MCF 10A (cell line): ENCODE measurements at regions of chr19 and their contacts with region 1.

Region 1: DNA sequence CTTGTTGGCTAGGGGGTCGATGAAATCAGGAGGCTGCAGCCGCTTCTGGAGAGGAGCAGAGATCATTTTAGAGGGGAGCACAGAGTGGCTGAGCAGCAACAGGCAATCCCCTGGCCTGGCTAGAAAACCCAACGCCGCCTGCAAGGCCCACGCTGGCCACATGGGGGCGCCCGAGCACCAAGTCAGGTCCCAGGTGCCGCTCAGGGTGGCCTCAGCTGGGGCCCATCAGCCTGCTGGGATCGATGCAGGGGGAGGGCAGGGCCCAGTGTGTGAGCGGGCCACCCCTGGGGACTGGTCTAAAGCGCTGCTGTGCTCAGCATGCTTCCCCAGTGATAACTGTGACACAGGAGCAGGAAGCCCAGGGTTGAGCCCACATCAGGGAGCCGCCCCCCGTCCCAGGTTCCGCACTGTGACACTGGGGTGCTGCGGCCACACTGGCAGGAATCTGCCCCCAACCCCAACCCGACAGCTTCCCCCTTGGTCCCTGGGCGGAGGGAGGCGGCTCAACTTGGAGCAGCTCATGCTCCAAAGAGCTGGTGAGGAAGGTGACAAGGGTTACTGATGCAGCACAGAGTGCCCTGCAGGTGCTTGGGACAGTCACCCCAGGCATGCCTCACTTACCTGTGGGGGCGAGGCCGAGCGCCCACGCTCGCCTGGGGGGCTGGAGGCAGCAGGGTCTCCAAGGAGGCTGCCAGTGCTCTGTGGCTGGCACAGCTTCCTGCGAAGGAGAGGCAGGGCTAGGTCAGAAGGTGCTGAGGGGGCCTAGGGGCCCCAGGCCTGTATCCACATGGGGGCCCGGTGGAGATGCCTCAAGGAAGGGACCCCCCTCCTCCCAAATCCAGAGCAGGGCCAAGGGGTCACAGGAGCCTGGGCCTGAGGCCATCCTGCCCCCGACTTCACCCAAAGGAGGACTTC is 13.3 kb upstream of the ISYNA1 start:
- DNase-seq: peak; percentile 78
- H3K4me3 Mint-ChIP-seq: no peak overlapping the region
- H3K27ac Mint-ChIP-seq: peak overlapping the region; percentile 14
- H3K4me1 Mint-ChIP-seq: peaks cover 9% of the 10 kb centered on the region
- H3K27me3 Mint-ChIP-seq: no peaks in the 10 kb centered on the region
- CTCF ChIP-seq: peak; percentile 97

Region 2: GRCh38 chr19:18440415-18440877 is 10.7 kb before region 1 on chr19:
- CTCF ChIA-PET with region 1: interaction called, 25 read pairs
- POLR2A ChIA-PET with region 1: interaction called, 3 read pairs
- intact Hi-C with region 1: no loop called
- DNase-seq: peak; percentile 31
- H3K4me3 Mint-ChIP-seq: no peak overlapping the region
- H3K27ac Mint-ChIP-seq: no peak overlapping the region
- H3K4me1 Mint-ChIP-seq: peaks cover 33% of the 10 kb centered on the region
- H3K27me3 Mint-ChIP-seq: no peaks in the 10 kb centered on the region
- CTCF ChIP-seq: peak; percentile 7

Region 3: DNA sequence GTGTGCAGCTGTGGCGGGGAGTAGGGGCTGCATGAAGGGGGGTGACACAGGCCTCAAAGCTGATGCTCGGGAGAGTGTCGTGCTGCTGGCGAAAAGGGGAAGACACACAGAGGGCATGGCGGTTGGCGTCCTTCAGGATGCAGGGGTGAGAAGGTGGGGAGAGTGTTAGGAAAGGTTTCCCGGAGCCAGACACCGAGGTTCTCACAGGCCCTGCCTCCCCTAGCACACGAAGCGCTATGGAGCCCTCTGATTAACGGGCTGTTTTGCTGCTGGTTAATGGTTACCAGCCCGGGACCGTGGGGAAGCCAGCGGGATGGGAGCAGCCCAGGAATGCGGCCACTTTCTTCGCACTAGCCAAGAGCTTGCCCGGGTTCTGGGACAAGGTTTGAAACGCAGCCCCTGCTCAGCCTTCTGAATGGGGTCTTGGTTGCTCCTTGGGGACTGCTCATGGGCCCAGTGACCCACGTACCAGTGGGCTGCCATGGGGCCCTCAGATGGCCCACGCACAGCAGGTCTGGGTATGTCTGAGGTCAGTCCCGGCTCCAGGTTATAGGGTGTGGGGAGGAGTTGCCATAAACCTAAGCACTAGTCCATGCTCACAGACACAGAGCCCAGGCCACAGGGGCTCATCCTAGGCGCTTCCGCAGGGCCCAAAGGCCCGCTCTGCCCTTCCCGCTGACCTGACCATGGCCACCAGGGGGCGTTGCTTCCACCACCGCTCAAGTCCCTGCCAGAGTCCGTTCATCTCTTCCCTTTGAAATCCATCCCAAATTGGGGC is 18.1 kb after region 1 on chr19:
- CTCF ChIA-PET with region 1: interaction called, 59 read pairs
- POLR2A ChIA-PET with region 1: no interaction called
- intact Hi-C with region 1: no loop called
- DNase-seq: peak; percentile 57
- H3K4me3 Mint-ChIP-seq: no peak overlapping the region
- H3K27ac Mint-ChIP-seq: no peak overlapping the region
- H3K4me1 Mint-ChIP-seq: peaks cover 26% of the 10 kb centered on the region
- H3K27me3 Mint-ChIP-seq: no peaks in the 10 kb centered on the region
- CTCF ChIP-seq: peak; percentile 84

Region 4: DNA sequence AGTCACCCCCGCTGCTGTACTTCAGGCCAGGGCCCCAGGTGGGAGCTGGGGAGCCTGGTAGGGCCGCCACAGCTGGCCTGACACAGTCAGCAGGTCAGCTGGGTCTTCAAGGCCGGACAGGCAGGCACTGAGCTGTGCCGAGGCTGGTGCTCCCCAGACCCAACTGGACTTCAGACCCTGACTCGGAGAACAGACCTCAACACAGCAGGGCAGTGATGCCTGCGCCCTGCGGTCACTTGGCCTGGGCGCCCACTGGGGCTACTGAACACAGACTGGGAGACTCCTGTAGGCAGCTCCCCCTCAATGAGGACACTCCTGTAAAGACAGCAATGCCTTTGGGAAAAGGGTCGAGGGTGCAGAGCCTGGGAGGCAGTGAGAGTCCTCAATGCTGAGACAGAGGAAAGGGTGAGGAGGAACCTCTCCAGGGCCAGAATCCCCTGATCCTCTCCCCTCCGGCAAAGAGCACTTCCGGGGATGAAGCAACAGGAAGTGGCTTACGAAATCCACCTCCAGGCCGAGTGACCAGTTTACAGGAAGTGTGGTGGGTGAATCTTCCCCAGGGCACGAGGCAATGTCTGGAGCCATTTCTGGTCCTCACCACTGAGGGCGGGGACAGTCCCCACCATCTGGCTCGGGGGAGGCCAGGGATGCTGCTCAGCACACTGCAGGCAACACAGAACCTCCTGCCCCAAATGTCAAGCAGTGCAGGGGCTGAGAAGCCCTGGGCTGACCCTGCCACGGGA is 27.6 kb after region 1 on chr19:
- CTCF ChIA-PET with region 1: interaction called, 10 read pairs
- POLR2A ChIA-PET with region 1: no interaction called
- intact Hi-C with region 1: no loop called
- DNase-seq: peak; percentile 94
- H3K4me3 Mint-ChIP-seq: peak overlapping the region; percentile 50
- H3K27ac Mint-ChIP-seq: peak overlapping the region; percentile 84
- H3K4me1 Mint-ChIP-seq: peaks cover 36% of the 10 kb centered on the region
- H3K27me3 Mint-ChIP-seq: no peaks in the 10 kb centered on the region
- CTCF ChIP-seq: no peak

Region 5: DNA sequence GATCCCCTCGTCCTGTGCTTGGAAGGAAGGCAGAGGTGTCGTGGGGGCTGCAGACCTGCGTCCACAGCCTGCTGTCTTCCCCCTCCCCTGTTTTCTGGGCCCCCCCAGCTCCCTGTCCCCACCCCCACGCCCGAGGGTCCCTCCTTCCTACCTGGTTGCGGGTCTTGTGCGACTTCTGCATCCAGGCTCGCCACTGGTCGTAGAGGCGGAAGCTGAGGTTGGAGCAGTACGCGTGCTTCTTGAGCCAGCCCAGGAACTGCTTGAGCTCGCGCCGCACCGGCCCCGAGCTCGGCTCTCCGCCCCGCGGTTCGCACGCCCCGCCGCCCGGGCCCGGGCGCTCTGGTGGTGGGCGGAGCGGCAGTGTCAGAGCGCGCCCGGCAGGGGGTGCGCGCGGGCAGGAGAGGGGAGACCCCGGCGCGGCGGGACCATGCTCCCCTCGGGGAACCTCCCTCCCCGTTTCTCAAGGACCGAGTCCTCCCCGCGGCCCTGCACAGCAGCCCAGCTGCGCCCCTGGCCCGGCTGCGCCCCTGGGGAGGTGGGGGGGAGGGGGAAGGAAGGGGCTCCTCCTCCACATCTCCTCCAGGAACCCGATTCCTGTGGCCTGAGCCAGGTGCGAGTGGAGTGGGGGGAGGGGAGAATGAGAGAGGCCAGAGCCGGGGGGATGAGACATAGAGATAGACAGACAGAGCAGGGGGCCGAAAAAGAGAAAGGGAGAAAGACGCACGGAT is 143.1 kb after region 1 on chr19:
- CTCF ChIA-PET with region 1: interaction called, 20 read pairs
- POLR2A ChIA-PET with region 1: interaction called, 4 read pairs
- intact Hi-C with region 1: no loop called
- DNase-seq: peak; percentile 73
- H3K4me3 Mint-ChIP-seq: no peak overlapping the region
- H3K27ac Mint-ChIP-seq: no peak overlapping the region
- H3K4me1 Mint-ChIP-seq: peaks cover 17% of the 10 kb centered on the region
- H3K27me3 Mint-ChIP-seq: no peaks in the 10 kb centered on the region
- CTCF ChIP-seq: peak; percentile 93